Ovary (tissue), 10 donors: ENCODE measurements at regions of chr6 and their contacts with region 1.

Region 1: GRCh38 chr6:44285552-44286284 is 15.5 kb downstream of the TMEM151B start:
- DNase-seq: no peak
- H3K4me3 ChIP-seq: no peak overlapping the region
- H3K27ac ChIP-seq: no peak overlapping the region
- H3K4me1 ChIP-seq: no peaks in the 10 kb centered on the region
- H3K27me3 ChIP-seq: no peaks in the 10 kb centered on the region
- CTCF ChIP-seq: no peak
- EP300 ChIP-seq: no peak
- POLR2A ChIP-seq: no peak

Region 2: DNA sequence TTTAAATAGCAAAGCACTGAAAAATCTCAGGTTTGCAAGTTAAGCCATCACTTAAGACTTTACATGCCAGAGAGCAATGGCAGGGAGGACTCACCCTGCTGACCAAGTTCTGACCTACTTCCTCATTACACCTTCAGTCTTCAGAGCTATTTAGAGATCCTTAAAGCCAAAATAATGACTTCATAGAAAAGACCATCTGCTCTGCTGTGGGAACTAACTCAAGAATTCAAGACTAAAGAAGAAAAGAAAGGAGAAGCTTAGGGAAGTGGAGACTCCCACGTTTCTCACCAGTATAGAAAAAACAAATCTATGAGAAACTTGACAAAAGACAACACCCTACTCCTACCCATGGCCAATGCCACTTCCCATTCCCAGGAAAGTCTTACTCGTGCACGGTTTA is 738.5 kb before region 1 on chr6:
- intact Hi-C with region 1: loop called in 1 of 4 experiments (anchors 5 kb)
- DNase-seq: no peak
- H3K4me3 ChIP-seq: no peak overlapping the region
- H3K27ac ChIP-seq: no peak overlapping the region
- H3K4me1 ChIP-seq: no peaks in the 10 kb centered on the region
- H3K27me3 ChIP-seq: no peaks in the 10 kb centered on the region
- CTCF ChIP-seq: no peak
- EP300 ChIP-seq: no peak
- POLR2A ChIP-seq: no peak

Region 3: DNA sequence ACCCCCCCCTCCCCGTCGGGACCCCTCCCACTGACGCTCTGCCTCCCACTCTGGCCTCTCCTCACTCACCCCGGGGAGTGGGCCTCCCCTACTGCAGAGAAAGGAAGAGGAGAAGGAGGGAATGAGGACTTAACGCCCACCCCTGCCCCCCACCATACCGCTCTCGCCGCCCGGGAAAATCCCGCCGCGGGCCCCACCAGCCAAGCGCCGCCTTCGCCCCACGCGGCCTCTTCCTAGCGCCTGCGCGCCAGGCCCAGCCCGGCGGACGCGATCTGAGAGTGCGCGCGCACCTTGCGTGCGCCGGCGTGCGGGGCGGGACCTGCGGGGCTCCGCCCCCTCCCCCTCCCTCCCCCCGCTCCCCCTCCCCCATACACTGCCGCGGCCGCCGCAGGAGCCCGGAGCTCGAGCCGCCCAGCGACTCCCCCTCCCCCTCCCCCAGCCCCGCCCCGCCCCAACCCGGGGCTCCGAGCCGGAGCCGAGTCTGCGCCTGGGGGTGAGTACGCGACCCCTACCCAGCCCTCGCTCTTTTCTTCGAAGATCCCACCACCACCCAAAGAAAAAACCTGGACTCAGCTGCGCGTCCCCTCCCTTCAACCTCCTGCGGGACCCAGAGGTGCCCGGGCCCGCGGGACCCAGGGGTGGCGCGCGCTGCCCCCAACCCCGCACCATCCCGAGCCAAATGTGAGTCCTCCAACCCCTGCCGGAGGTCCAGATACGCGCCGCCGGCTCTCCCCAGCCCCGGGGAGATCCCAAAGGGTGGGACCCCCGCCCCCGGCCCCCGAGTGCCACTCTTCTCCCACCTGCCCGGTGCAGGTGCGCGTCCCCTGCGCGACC is 158.3 kb before region 1 on chr6 and contains the starts of genes MRPL14 and TMEM63B:
- intact Hi-C with region 1: no loop called
- DNase-seq: peak; percentile 87 to 95 (median 92)
- H3K4me3 ChIP-seq: peak within 1 kb of the TSS; percentile 84
- H3K27ac ChIP-seq: peak within 1 kb of the TSS; percentile 58 to 71
- H3K4me1 ChIP-seq: peaks cover 6% of the 10 kb centered on the region
- H3K27me3 ChIP-seq: no peaks in the 10 kb centered on the region
- CTCF ChIP-seq: no peak
- EP300 ChIP-seq: no peak
- POLR2A ChIP-seq: peak; percentile 45
- total RNA-seq, gene MRPL14: 21.5 to 35.9 (median 24.9) TPM
- total RNA-seq, gene TMEM63B: 7.5 to 20.6 (median 16.5) TPM